ENCODE measurements at regions of chrX and their contacts with region 1.

Region 1: DNA sequence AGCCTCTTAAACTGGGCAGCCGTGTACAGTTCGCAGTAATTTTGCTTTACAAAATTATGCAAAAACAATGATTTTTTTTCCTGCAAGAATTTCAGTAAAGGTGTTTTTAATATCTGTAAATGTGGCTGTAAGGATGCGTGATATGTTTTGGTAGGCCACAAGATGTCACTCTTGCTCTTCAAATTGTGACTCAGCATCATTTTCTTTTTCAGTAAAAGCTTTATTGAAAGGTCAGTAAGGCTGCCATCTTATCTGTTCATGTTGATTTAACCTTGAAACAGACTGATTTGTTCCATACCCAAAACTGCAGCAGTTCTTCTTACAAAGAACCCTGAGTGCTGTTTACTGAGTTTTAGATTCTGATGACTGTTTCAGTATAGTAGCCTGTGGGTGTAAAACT is 39.9 kb downstream of the TXLNG start:
- DNase-seq: peak; percentile 41 to 72
- ATAC-seq: peak; percentile 78 to 79; a peak in 5 of 6 replicates
- H3K4me3 ChIP-seq: no peak overlapping the region
- H3K27ac ChIP-seq: peak overlapping the region; percentile 56 to 80
- H3K4me1 ChIP-seq: peaks cover 39% of the 10 kb centered on the region
- CTCF ChIP-seq: peak; percentile 63
- EP300 ChIP-seq: no peak
- POLR2A ChIP-seq: no peak
- RAD21 ChIP-seq: peak; percentile 63 to 71

Region 2: DNA sequence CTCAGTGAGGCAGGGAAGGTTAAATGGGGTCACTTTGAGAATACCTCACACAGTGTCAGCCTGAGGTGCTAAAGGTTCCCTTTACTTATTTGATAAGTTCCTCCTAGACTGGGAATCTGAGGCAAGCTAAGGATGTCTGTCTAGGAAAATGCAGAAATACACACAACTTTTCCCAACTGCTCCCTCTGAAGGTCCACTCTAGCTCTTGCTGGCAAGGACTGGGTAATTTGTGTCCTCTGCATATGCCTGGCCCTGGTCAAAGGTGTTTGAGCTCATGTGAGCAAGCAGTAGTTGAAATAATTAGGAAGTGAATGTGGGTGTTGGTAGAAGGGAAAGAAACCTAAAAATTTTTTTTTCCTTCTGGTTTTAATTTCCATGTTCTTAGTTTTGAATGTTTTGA is 18.7 kb before region 1 on chrX:
- CTCF ChIA-PET with region 1: interaction called, 10 read pairs
- POLR2A ChIA-PET with region 1: no interaction called
- DNase-seq: peak in 1 of 2 experiments; percentile 12
- ATAC-seq: peak; percentile 77 to 82
- H3K4me3 ChIP-seq: no peak overlapping the region
- H3K27ac ChIP-seq: peak overlapping the region in 1 of 2 experiments; percentile 65; a peak in 4 of 6 replicates
- H3K4me1 ChIP-seq: peaks cover 20% of the 10 kb centered on the region
- CTCF ChIP-seq: no peak
- EP300 ChIP-seq: no peak
- POLR2A ChIP-seq: no peak
- RAD21 ChIP-seq: no peak

Region 3: DNA sequence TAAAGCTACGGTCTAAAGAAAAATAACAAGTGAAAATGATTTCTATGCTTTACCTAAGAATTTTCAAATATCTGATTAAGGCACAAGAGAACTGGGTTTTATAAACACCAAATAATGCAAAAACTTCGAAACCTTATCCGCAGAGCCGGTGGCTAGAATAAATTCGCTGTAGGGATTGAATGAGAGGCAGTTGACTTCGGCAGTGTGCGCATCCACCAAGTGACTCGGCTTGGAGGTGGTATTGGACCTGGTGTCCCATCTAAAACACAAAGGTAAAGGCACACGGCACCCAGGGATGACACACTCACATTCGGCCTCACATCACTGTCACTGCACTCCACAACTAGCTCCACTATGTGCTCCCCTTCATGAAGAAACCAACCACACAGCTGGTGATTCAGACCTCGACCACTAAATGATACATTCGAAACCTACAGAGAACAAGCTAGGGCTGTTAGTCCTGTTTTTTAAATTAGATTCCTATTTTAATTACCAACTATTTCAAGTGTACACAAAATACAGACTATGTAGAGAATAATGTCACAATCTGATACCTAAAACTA is 26.5 kb after region 1 on chrX:
- CTCF ChIA-PET with region 1: interaction called, 10 read pairs
- POLR2A ChIA-PET with region 1: no interaction called
- DNase-seq: no peak
- ATAC-seq: no peak
- H3K4me3 ChIP-seq: no peak overlapping the region
- H3K27ac ChIP-seq: no peak overlapping the region
- H3K4me1 ChIP-seq: no peaks in the 10 kb centered on the region; the same call in 2 of the 3 replicates
- CTCF ChIP-seq: no peak
- EP300 ChIP-seq: no peak
- POLR2A ChIP-seq: no peak
- RAD21 ChIP-seq: no peak

Region 4: GRCh38 chrX:16892504-16893362 is 66.5 kb after region 1 on chrX:
- CTCF ChIA-PET with region 1: interaction called, 21 read pairs
- POLR2A ChIA-PET with region 1: no interaction called
- DNase-seq: peak; percentile 72 to 89
- ATAC-seq: peak; percentile 95 to 97
- H3K4me3 ChIP-seq: no peak overlapping the region
- H3K27ac ChIP-seq: peak overlapping the region; percentile 47 to 51; a peak in 2 of 6 replicates
- H3K4me1 ChIP-seq: 0 out of 3 replicates have a peak, but pooled peaks cover 3% of the 10 kb centered on the region
- CTCF ChIP-seq: peak; percentile 82
- EP300 ChIP-seq: no peak
- POLR2A ChIP-seq: no peak
- RAD21 ChIP-seq: peak; percentile 49 to 56

Region 5: DNA sequence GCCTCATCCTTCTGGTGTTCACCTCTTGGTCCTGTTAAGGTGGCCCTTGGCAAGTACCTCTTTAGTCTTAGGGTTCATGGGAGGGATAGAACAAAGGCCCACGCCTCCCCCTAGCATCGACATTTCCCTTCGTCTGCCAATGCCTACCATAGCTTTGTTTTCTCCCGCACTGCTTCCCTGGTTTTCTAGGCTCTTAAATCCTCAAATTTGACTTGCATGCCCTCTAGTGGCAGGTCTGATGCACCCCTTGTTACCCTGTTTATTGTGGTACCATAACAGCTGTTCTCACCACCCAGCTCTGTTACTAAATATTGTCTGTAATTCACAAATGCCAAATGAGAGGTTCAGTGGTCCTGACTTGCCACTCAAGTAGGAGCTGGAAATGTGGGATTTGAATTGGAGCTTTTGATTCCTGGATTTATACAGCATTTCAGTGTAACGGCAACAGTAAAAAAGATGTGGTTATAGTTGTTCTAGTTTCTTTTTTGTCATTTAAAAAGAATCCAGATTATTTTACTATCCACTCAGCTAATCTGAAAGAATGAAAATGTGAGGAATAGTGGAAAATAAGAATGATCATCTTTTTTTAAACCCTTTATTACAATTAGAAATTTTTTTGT is 220.4 kb after region 1 on chrX:
- CTCF ChIA-PET with region 1: interaction called, 70 read pairs
- POLR2A ChIA-PET with region 1: interaction called, 3 read pairs
- DNase-seq: peak; percentile 29 to 77
- ATAC-seq: peak; percentile 97 to 98
- H3K4me3 ChIP-seq: no peak overlapping the region
- H3K27ac ChIP-seq: no peak overlapping the region
- H3K4me1 ChIP-seq: no peaks in the 10 kb centered on the region
- CTCF ChIP-seq: peak; percentile 70
- EP300 ChIP-seq: no peak
- POLR2A ChIP-seq: no peak
- RAD21 ChIP-seq: peak; percentile 78 to 85

Measured in A549 (cell line).